ENCODE measurements at regions of chr9 and their contacts with region 1.

Region 1: GRCh38 chr9:124537926-124538325 is 30.7 kb upstream of the NR5A1 start:
- DNase-seq: peak; percentile 28
- H3K4me3 ChIP-seq: no peak overlapping the region
- H3K27ac ChIP-seq: no peak overlapping the region
- H3K4me1 ChIP-seq: no peaks in the 10 kb centered on the region
- H3K27me3 ChIP-seq: no peaks in the 10 kb centered on the region
- CTCF ChIP-seq: no peak

Region 2: GRCh38 chr9:124415102-124415851 is 122.6 kb before region 1 on chr9 and contains the start of gene PSMB7:
- intact Hi-C with region 1: loop called (anchors 5 kb)
- DNase-seq: peak; percentile 97
- H3K4me3 ChIP-seq: peak within 1 kb of the TSS; percentile 86
- H3K27ac ChIP-seq: no peak within 1 kb of the TSS
- H3K4me1 ChIP-seq: no peaks in the 10 kb centered on the region
- H3K27me3 ChIP-seq: no peaks in the 10 kb centered on the region
- CTCF ChIP-seq: peak; percentile 77
- total RNA-seq, gene PSMB7: 89.8 to 136 TPM

Region 3: DNA sequence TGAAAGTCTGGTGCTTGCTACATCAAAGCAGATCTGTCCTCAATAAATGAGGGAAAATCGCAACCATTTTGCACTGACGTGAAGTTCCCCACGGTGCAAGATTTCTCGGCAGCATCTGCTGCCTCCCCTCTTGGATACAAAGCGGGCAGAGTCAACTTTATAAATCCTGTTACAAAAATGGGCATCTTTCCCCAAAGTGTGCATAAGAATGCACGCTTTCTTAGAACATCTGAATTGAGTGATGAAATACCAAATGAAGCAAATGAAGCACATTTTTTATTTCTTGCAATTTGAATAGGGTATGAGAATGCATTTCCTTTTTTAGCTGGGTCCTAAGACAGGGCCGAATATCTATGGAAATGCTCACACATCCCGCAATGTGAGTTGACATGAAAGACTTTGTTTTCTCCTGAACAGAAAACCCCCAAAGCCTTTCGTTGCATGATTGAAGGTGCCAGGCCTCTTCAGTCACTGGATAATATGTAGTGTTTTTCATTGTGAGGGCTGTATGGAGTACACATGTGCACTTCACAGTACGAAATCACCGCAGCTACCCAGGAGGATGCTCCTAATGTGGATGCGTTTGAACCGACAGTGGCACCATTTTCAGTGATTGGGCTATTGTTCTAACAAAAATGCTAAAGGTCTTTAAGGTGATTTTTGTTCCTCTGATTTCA is 1188.7 kb after region 1 on chr9:
- intact Hi-C with region 1: no loop called
- DNase-seq: no peak
- H3K4me3 ChIP-seq: no peak overlapping the region
- H3K27ac ChIP-seq: no peak overlapping the region
- H3K4me1 ChIP-seq: no peaks in the 10 kb centered on the region
- H3K27me3 ChIP-seq: no peaks in the 10 kb centered on the region
- CTCF ChIP-seq: no peak